Breast epithelium (tissue), 4 donors: ENCODE measurements at regions of chr11 and their contacts with region 1.

Region 1: GRCh38 chr11:70804139-70804837 is 406.0 kb downstream of the CTTN start:
- DNase-seq: no peak
- H3K4me3 ChIP-seq: no peak overlapping the region
- H3K27ac ChIP-seq: peak overlapping the region in 1 of 2 donors; percentile 2
- H3K4me1 ChIP-seq: no peaks in the 10 kb centered on the region
- H3K27me3 ChIP-seq: no peaks in the 10 kb centered on the region
- CTCF ChIP-seq: no peak
- POLR2A ChIP-seq: no peak

Region 2: GRCh38 chr11:70824605-70825245 is 20.4 kb after region 1 on chr11:
- intact Hi-C with region 1: loop called (anchors 1 kb)
- DNase-seq: no peak
- H3K4me3 ChIP-seq: no peak overlapping the region
- H3K27ac ChIP-seq: no peak overlapping the region
- H3K4me1 ChIP-seq: no peaks in the 10 kb centered on the region
- H3K27me3 ChIP-seq: peaks cover 0 to 5% of the 10 kb centered on the region in 2 donors
- CTCF ChIP-seq: no peak
- POLR2A ChIP-seq: no peak